Activated CD4-positive, alpha-beta T cell treated with anti-CD3 and anti-CD28 coated beads for 36 hours (primary cell): ENCODE measurements at regions of chr2 and their contacts with region 1.

Region 1: GRCh38 chr2:108927936-108928659 is 60.9 kb downstream of the EDAR start:
- DNase-seq: peak; percentile 64
- ATAC-seq: peak; percentile 68
- H3K4me3 Mint-ChIP-seq: no peak overlapping the region
- H3K27ac Mint-ChIP-seq: no peak overlapping the region
- H3K4me1 Mint-ChIP-seq: peaks cover 4% of the 10 kb centered on the region
- H3K27me3 Mint-ChIP-seq: no peaks in the 10 kb centered on the region

Region 2: DNA sequence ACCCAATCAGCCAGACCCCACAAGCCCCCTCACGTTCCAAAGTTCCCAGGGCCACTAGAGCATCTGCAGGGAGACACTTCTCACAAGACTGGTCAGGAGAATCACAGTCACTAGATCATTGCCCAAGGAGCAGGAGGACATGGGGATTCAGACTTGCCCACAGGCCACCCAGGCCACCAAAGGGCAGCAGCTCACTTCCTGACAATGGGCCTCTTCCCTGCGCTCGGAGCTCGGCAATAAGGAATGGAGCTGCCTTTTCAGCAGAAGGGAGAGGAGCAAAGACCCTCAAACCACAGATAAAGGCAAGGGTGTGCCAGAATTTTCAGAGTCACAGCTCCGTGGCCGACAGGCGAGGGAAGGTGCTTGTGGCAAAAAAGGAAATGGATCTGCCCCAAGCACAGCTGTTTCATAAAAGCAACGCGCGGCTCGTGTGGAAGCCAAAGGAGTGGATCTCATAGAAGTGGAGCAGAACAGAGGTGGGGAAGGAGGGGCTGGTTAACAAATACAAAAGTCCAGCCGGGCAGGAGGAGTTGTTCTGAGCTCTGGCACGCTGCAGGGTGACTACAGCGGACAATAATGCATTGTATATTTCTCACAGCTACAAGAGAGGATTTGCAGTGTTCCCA is 11.2 kb before region 1 on chr2:
- CTCF ChIA-PET with region 1: interaction called, 10 read pairs
- POLR2A ChIA-PET with region 1: no interaction called
- intact Hi-C with region 1: no loop called
- DNase-seq: no peak
- ATAC-seq: no peak
- H3K4me3 Mint-ChIP-seq: no peak overlapping the region
- H3K27ac Mint-ChIP-seq: no peak overlapping the region
- H3K4me1 Mint-ChIP-seq: peaks cover 3% of the 10 kb centered on the region
- H3K27me3 Mint-ChIP-seq: no peaks in the 10 kb centered on the region

Region 3: GRCh38 chr2:109001201-109001600 is 73.1 kb after region 1 on chr2:
- CTCF ChIA-PET with region 1: interaction called, 13 read pairs
- POLR2A ChIA-PET with region 1: no interaction called
- intact Hi-C with region 1: no loop called
- DNase-seq: no peak
- ATAC-seq: no peak
- H3K4me3 Mint-ChIP-seq: no peak overlapping the region
- H3K27ac Mint-ChIP-seq: no peak overlapping the region
- H3K4me1 Mint-ChIP-seq: peaks cover 8% of the 10 kb centered on the region
- H3K27me3 Mint-ChIP-seq: no peaks in the 10 kb centered on the region

Region 4: DNA sequence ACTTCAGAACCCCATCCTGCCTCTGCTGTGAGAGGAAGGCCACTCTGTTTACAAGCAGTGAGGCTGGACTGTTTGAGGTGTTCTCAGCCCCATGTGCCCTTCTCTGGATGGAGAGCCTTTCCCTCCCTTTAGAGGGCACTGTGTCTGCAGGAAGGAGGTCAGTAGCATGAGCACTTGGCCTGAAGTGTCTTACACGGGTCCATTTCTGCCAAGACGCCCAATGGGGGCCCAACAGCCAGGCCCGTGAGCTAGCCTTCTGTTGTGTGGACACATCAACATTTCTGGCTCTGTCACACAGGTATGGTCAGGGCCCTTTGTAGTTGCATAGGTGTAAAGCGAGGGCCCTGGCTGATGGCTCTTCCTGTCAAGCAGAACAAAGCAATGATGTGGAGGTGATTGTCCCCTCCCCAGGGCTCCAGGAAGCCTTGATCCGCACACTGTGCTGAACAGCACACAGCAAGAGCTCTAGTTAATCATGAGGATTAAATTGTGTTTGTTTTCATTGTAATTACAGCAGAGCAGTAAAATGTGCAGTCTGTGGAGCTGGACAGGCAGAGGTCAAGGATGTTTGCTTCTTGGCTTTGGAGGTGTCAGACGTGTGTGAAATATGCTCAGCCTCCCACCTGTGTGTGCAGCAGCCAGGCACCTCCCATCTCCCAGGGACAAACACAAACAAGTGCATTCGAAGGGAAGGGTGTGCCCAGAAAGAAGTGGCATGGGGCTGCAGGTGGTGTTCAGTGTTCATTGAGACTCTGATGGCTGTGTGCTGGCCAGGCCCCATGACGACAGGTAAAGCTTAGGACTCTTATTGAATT is 333.0 kb after region 1 on chr2:
- CTCF ChIA-PET with region 1: no interaction called
- POLR2A ChIA-PET with region 1: no interaction called
- intact Hi-C with region 1: no loop called
- DNase-seq: no peak
- ATAC-seq: peak; percentile 47
- H3K4me3 Mint-ChIP-seq: no peak overlapping the region
- H3K27ac Mint-ChIP-seq: no peak overlapping the region
- H3K4me1 Mint-ChIP-seq: no peaks in the 10 kb centered on the region
- H3K27me3 Mint-ChIP-seq: no peaks in the 10 kb centered on the region